ENCODE measurements at regions of chr11 and their contacts with region 1.

Region 1: DNA sequence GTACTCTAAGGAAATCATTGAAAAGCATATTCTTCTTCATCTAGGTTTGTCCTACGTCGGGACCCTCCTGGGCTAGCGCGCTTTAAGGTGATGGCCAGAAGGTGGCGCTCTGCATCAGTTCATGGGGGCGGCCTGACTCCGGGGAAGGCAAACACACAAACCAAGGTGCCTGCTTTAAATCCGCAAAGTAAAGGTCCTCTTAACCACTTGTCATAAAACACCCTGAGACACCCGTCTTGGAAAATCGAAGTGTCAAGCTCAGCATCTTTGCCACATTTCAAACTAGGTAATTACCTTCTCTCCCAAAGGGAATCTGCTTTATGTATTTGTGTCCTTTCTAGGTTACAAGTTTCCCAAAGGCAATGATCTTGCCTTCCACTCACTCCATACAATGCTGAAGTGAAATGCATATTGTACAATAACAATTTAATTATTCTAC is 33.9 kb downstream of the LMO2 start:
- DNase-seq: peak; percentile 76
- H3K4me3 ChIP-seq: no peak overlapping the region
- H3K27ac ChIP-seq: no peak overlapping the region
- H3K4me1 ChIP-seq: no peaks in the 10 kb centered on the region
- H3K27me3 ChIP-seq: no peaks in the 10 kb centered on the region
- CTCF ChIP-seq: peak; percentile 91

Region 2: GRCh38 chr11:33970984-33971466 is 113.1 kb after region 1 on chr11:
- intact Hi-C with region 1: loop called (anchors 5 kb)
- DNase-seq: peak; percentile 37
- H3K4me3 ChIP-seq: no peak overlapping the region
- H3K27ac ChIP-seq: no peak overlapping the region
- H3K4me1 ChIP-seq: no peaks in the 10 kb centered on the region
- H3K27me3 ChIP-seq: no peaks in the 10 kb centered on the region
- CTCF ChIP-seq: peak; percentile 36

Region 3: DNA sequence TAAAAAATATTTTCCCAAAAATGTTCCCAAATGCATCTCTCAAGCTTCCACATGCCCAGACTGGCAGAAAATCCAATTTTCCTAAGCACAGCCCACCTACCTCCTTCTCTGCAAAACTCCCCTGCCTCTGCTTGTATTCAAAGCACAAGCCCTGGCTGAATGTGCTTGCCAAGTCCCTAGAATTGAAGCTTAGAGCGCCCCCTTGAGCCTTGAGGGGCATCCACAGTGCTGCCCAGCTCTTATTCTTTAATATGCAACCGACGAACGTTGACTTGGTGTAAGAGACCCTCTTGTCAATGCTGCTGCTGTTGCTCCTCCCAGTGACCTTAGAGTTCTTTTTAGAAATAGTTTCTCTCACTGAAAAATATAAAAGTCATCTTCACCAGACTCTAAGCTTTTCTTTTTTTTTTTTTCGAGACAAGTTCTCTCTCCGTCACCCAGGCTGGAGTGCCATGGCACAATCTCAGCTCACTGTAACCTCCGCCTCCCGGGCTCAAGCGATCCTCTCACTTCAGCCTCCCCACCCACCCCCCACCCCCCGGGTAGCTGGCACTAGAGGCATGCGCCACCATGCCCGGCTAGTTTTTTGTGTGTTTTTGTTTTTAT is 130.1 kb after region 1 on chr11:
- intact Hi-C with region 1: loop called (anchors 2 kb)
- DNase-seq: peak; percentile 74
- H3K4me3 ChIP-seq: no peak overlapping the region
- H3K27ac ChIP-seq: no peak overlapping the region
- H3K4me1 ChIP-seq: no peaks in the 10 kb centered on the region
- H3K27me3 ChIP-seq: no peaks in the 10 kb centered on the region
- CTCF ChIP-seq: peak; percentile 94

Region 4: GRCh38 chr11:34174412-34175041 is 316.6 kb after region 1 on chr11:
- intact Hi-C with region 1: loop called (anchors 10 kb)
- DNase-seq: peak; percentile 86
- H3K4me3 ChIP-seq: peak overlapping the region; percentile 28
- H3K27ac ChIP-seq: no peak overlapping the region
- H3K4me1 ChIP-seq: no peaks in the 10 kb centered on the region
- H3K27me3 ChIP-seq: no peaks in the 10 kb centered on the region
- CTCF ChIP-seq: peak; percentile 92